ENCODE measurements at regions of chr15 and their contacts with region 1.

Region 1: GRCh38 chr15:60374628-60375081 is 23.1 kb downstream of the ANXA2 start:
- DNase-seq: peak; percentile 88 to 100
- ATAC-seq: peak; percentile 72 to 78
- H3K4me3 ChIP-seq: no peak overlapping the region
- H3K27ac ChIP-seq: peak overlapping the region; percentile 90
- H3K4me1 ChIP-seq: peaks cover 95% of the 10 kb centered on the region
- CTCF ChIP-seq: peak; percentile 37; the same call in 2 of the 3 replicates
- EP300 ChIP-seq: peak; percentile 93 to 97
- POLR2A ChIP-seq: no peak
- RAD21 ChIP-seq: peak; percentile 56 to 72

Region 2: DNA sequence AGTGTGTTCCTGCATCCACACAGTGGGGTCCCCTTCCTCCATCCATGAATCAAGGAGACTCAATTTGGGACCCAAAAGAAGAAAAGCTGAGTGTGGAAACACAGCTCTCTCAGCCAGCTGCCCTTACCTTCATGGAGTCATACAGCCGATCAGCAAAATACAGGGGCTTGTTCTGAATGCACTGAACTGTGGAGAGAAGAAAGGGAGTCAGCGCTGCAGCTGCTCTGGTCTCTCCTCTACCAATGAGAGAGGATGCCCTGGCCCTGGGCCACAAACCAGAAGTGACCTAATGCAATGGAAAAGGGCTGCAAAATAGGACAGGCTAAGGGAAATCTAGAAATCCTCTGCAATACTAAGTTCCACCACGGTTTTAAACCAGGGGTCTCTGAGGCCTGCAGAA is 23.6 kb before region 1 on chr15:
- CTCF ChIA-PET with region 1: interaction called, 174 read pairs
- POLR2A ChIA-PET with region 1: interaction called, 3 read pairs
- DNase-seq: peak in 1 of 2 experiments; percentile 28
- ATAC-seq: peak; percentile 40 to 46
- H3K4me3 ChIP-seq: no peak overlapping the region
- H3K27ac ChIP-seq: peak overlapping the region in 1 of 2 experiments; percentile 58; a peak in 2 of 6 replicates
- H3K4me1 ChIP-seq: peaks cover 99% of the 10 kb centered on the region
- CTCF ChIP-seq: no peak
- EP300 ChIP-seq: no peak
- POLR2A ChIP-seq: no peak
- RAD21 ChIP-seq: no peak

Region 3: DNA sequence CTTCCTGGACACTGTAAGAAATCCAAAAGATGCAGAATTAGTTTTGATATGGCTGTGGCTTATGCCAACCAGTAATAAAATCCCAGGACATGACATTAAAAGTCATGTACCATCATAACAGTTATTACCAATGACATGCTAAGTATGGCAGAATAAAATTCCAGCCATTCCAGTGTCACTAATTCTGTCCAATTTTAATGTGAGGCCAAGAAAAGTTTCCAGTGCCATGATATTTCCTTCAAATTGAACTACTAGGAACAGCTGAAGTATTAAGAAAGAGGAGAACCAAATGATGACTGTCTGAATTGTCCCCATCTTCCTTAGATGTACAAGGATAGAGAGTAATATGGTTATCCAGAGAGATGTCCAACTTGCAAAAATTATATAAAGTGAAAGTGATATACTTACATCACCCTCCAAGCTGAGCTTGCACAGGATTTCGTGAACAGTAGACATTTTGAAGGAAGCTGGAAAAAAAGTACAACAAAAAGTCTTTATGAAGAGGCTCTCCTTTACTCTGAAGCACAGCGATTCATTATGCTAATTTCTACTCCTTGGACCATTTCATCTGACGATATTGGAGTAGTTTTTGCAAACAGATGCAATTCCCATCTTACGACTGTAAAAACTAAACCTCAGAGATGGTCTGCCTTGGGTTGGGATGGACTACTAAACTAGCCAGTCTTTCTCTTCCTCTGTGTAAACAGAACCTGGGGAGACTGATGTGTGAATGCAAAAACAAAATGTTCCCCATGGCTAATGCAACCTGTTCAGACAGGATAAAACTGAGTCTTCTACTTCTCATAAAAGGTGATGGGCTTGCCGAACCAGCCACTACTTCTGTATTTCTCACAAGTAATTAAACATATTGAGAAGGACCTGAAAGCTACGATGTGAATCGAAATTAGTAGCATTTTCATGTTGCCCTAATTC is 11.2 kb after region 1 on chr15:
- CTCF ChIA-PET with region 1: interaction called, 18 read pairs
- POLR2A ChIA-PET with region 1: interaction called, 152 read pairs
- DNase-seq: peak in 1 of 2 experiments; percentile 24
- ATAC-seq: 0 out of 6 replicates have a peak, but pooled peaks of 1 of the 2 experiments have one; percentile 0
- H3K4me3 ChIP-seq: peak overlapping the region; percentile 7; the same call in 1 of the 3 replicates
- H3K27ac ChIP-seq: peak overlapping the region; percentile 5 to 56; a peak in 5 of 6 replicates
- H3K4me1 ChIP-seq: peaks cover 100% of the 10 kb centered on the region
- CTCF ChIP-seq: no peak
- EP300 ChIP-seq: no peak
- POLR2A ChIP-seq: no peak
- RAD21 ChIP-seq: no peak

Region 4: DNA sequence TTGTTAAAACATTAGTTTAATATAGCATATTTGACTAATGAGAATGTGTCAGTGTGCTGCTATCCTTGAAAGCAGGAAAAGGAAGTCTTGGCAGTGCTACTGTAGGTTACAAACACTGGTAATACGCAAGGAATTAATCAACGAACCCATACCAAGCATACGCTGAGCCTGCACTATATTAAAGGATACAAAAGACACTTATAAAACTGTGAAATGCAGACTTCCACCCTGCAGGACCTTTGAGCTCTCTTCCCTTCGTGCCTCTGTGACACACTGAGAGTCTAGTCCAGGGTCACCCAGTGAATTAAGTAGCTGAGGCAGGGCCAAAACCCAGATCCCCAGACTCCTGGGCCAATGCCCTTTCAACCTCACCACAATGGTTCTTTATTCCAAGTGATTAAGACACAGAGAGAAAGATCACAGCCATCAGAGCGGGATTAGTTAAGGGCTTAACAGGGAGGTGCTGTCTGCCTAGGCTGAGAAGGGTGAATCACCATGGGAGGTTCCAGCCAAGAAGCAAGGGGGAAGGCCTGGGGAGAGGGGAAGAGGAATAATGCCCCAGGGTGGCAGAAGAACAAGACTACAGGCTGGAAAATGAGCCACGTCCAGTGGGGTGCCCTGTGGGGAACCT is 16.3 kb after region 1 on chr15:
- CTCF ChIA-PET with region 1: interaction called, 18 read pairs
- POLR2A ChIA-PET with region 1: interaction called, 152 read pairs
- DNase-seq: peak in 1 of 2 experiments; percentile 82
- ATAC-seq: peak; percentile 33 to 46
- H3K4me3 ChIP-seq: peak overlapping the region; percentile 35
- H3K27ac ChIP-seq: peak overlapping the region; percentile 97 to 99
- H3K4me1 ChIP-seq: peaks cover 88% of the 10 kb centered on the region
- CTCF ChIP-seq: peak; percentile 30; the same call in 1 of the 3 replicates
- EP300 ChIP-seq: no peak
- POLR2A ChIP-seq: no peak
- RAD21 ChIP-seq: peak; percentile 24 to 56; a peak in 4 of 5 replicates

Region 5: DNA sequence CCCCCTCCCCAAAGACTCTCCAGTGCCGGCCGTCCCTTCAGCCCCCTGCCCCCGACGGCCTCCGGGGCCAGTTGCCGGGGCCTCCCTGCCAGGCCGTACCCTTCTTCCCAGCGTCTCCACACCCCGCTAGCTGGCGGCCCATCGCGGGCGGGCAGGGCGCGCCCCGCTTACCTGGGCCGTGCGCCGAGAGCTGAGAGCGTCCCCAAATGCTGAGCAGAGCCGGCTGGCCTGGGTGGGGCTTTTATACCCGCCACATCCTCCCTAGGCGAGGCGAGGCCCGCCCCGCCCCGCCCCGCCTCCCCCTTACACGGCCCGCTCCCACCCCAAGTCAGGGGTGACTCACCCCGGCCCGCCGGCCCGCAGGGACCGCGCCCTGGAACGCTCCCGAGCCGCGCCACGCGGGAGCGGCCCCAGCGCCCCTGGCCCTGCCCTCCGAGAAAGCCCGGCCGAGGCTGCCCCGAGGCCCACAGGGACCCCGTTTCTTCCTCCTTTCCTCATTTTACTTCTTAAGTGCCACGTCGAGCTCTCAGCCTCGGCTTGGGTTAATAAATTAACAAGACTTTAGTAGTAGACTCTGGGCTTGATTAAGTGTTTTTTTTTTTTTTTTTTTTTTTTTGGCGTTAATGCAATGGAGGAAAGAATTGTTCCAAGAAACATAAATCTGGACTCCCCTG is 23.3 kb after region 1 on chr15 and contains the start of gene ANXA2:
- CTCF ChIA-PET with region 1: interaction called, 23 read pairs
- POLR2A ChIA-PET with region 1: interaction called, 152 read pairs
- DNase-seq: peak; percentile 84 to 95
- ATAC-seq: peak; percentile 62 to 72
- H3K4me3 ChIP-seq: peak within 1 kb of the TSS; percentile 88
- H3K27ac ChIP-seq: peak within 1 kb of the TSS; percentile 97 to 99
- H3K4me1 ChIP-seq: peaks cover 59% of the 10 kb centered on the region
- CTCF ChIP-seq: no peak
- EP300 ChIP-seq: peak in 1 of 2 experiments; percentile 37; a peak in 1 of 5 replicates
- POLR2A ChIP-seq: peak; percentile 92
- RAD21 ChIP-seq: no peak
- polyA plus RNA-seq, gene ANXA2: 5,725 and 5,746 TPM in 2 replicates

Region 6: GRCh38 chr15:60408438-60409105 is 33.9 kb after region 1 on chr15:
- CTCF ChIA-PET with region 1: interaction called, 13 read pairs
- POLR2A ChIA-PET with region 1: interaction called, 4 read pairs
- DNase-seq: peak; percentile 86 to 92
- ATAC-seq: peak; percentile 81 to 85
- H3K4me3 ChIP-seq: no peak overlapping the region
- H3K27ac ChIP-seq: peak overlapping the region; percentile 90
- H3K4me1 ChIP-seq: peaks cover 59% of the 10 kb centered on the region
- CTCF ChIP-seq: no peak
- EP300 ChIP-seq: peak; percentile 82 to 90; a peak in 3 of 5 replicates
- POLR2A ChIP-seq: no peak
- RAD21 ChIP-seq: peak in 1 of 2 experiments; percentile 29; a peak in 3 of 5 replicates

Region 7: GRCh38 chr15:60444289-60444912 is 69.7 kb after region 1 on chr15:
- CTCF ChIA-PET with region 1: interaction called, 80 read pairs
- POLR2A ChIA-PET with region 1: interaction called, 3 read pairs
- DNase-seq: peak; percentile 30 to 50
- ATAC-seq: peak in 1 of 2 experiments; percentile 58; a peak in 4 of 6 replicates
- H3K4me3 ChIP-seq: no peak overlapping the region
- H3K27ac ChIP-seq: peak overlapping the region; percentile 32 to 59; a peak in 4 of 6 replicates
- H3K4me1 ChIP-seq: peaks cover 58% of the 10 kb centered on the region
- CTCF ChIP-seq: peak; percentile 92
- EP300 ChIP-seq: no peak
- POLR2A ChIP-seq: no peak
- RAD21 ChIP-seq: peak; percentile 85 to 91